ENCODE measurements at regions of chr9 and their contacts with region 1.

Region 1: DNA sequence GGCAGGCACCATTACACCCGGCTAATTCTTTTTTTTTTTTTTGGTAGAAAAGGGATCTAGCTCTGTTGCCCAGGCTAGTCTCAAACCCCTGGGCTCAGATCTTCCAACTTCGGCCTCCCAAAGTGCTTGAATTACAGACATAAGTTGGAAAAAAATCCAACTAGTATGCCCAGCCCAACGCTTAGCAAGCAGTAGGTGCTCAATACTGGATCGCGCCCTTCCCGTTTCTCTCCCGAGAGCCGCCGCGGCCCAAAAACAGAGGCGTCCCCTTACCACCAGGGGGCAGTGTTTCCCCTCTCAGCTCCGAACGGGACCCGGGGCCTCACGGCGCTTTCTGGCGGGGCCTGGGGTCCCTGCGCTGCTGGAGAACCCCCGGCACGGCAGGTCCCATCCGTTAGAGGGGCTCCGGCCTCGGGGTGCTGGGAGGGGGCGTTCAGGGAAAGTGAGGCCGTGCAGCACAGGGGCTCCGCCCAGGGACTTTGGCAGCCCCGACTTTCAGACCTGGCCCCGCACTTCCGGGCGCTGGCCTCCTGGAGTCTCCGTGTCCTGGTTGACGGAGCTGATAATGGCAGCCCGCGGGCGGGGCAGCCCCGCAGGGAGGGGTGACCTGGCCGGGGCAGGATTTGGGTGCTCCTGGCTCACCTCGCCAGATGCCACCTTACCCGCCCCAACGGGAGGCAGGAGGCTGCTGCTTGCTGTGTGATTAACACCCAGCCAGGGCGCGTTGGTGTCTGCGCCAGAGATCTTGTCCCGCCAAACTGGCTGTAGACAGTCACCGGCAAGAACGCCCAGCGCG is 15.2 kb downstream of the PTGES start:
- DNase-seq: peak; percentile 90
- ATAC-seq: peak; percentile 86
- H3K4me3 ChIP-seq: peak overlapping the region; percentile 2 to 81 (median 66)
- H3K4me3 Mint-ChIP-seq: peak overlapping the region; percentile 71
- H3K27ac ChIP-seq: peak overlapping the region in 1 of 2 donors; percentile 78
- H3K27ac Mint-ChIP-seq: peak overlapping the region; percentile 74
- H3K4me1 ChIP-seq: peaks cover 0 to 16% of the 10 kb centered on the region in 2 donors
- H3K4me1 Mint-ChIP-seq: peaks cover 7% of the 10 kb centered on the region
- H3K27me3 ChIP-seq: peaks cover 0 to 12% (median 0%) of the 10 kb centered on the region in 4 experiments
- H3K27me3 Mint-ChIP-seq: no peaks in the 10 kb centered on the region
- CTCF ChIP-seq: peak; percentile 91

Region 2: GRCh38 chr9:129131300-129132145 is 606.2 kb before region 1 on chr9:
- CTCF ChIA-PET with region 1: interaction called, 9 read pairs
- POLR2A ChIA-PET with region 1: no interaction called
- intact Hi-C with region 1: loop called (anchors 1 kb)
- DNase-seq: peak; percentile 85
- ATAC-seq: peak; percentile 99
- H3K4me3 ChIP-seq: no peak overlapping the region
- H3K4me3 Mint-ChIP-seq: no peak overlapping the region
- H3K27ac ChIP-seq: no peak overlapping the region
- H3K27ac Mint-ChIP-seq: peak overlapping the region; percentile 20
- H3K4me1 ChIP-seq: peaks cover 4 to 8% of the 10 kb centered on the region in 2 donors
- H3K4me1 Mint-ChIP-seq: peaks cover 5% of the 10 kb centered on the region
- H3K27me3 ChIP-seq: no peaks in the 10 kb centered on the region
- H3K27me3 Mint-ChIP-seq: no peaks in the 10 kb centered on the region
- CTCF ChIP-seq: peak; percentile 97

Region 3: DNA sequence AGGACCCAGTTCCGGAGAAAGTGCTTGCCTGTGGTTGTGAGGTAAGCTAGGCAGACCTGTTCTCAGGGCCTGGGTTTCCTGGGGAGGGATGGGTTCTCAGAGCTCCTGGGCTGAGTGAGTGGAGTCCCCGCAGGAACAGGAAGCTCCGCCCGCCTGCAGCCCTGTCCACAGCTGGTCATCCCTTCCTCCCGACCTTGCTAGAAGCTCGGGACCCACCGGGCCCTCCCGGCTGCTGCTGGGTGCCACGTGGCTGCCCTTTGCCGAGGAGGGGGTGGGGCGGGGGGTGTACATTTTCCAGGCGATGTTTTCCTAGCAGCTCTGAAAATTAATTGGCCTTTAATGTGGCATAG is 314.9 kb before region 1 on chr9:
- CTCF ChIA-PET with region 1: no interaction called
- POLR2A ChIA-PET with region 1: no interaction called
- intact Hi-C with region 1: no loop called
- DNase-seq: no peak
- ATAC-seq: no peak
- H3K4me3 ChIP-seq: no peak overlapping the region
- H3K4me3 Mint-ChIP-seq: no peak overlapping the region
- H3K27ac ChIP-seq: no peak overlapping the region
- H3K27ac Mint-ChIP-seq: no peak overlapping the region
- H3K4me1 ChIP-seq: no peaks in the 10 kb centered on the region
- H3K4me1 Mint-ChIP-seq: no peaks in the 10 kb centered on the region
- H3K27me3 ChIP-seq: no peaks in the 10 kb centered on the region
- H3K27me3 Mint-ChIP-seq: peaks cover 3% of the 10 kb centered on the region
- CTCF ChIP-seq: no peak

Region 4: DNA sequence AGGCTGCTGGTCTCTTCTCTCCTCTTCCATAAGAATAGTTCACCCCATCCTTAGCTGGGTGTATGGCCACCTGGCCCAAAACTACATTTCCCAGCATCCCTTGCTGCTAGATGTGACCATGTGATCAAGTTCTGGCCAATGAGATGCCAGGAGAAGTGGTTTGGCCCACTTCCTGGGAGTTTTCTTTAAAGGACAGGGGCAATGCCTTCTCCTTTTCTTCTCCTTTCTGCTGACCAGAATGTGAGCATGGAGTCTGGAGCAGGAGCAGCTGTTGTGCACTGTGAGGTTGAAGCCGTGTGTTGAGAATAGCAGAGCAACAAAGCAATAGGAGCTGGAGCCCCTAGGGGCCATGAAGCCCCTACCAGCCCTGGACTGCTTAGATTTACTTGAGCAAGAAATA is 153.5 kb before region 1 on chr9:
- CTCF ChIA-PET with region 1: no interaction called
- POLR2A ChIA-PET with region 1: no interaction called
- intact Hi-C with region 1: no loop called
- DNase-seq: peak; percentile 77
- ATAC-seq: peak; percentile 72
- H3K4me3 ChIP-seq: no peak overlapping the region
- H3K4me3 Mint-ChIP-seq: no peak overlapping the region
- H3K27ac ChIP-seq: no peak overlapping the region
- H3K27ac Mint-ChIP-seq: peak overlapping the region; percentile 2
- H3K4me1 ChIP-seq: peaks cover 18 to 21% of the 10 kb centered on the region in 2 donors
- H3K4me1 Mint-ChIP-seq: peaks cover 22% of the 10 kb centered on the region
- H3K27me3 ChIP-seq: peaks cover 0 to 3% (median 1%) of the 10 kb centered on the region in 4 experiments
- H3K27me3 Mint-ChIP-seq: peaks cover 25% of the 10 kb centered on the region
- CTCF ChIP-seq: no peak

Region 5: DNA sequence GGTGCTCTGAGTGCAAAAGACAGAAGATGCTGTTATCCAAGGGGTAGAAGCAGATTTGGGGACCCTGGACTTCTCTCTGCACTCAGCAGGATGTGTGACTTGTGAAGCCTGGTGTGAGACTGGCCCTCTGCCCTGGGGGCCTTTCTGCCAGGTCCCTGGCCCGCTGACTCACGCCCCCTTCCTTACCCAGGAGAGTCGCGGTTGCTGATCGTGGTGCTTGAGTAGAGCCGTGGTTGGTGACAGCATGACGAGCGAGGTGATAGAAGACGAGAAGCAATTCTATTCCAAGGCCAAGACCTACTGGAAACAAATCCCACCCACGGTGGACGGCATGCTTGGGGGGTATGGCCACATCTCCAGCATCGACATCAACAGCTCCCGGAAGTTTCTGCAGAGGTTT is 105.2 kb before region 1 on chr9:
- CTCF ChIA-PET with region 1: no interaction called
- POLR2A ChIA-PET with region 1: no interaction called
- intact Hi-C with region 1: no loop called
- DNase-seq: no peak
- ATAC-seq: no peak
- H3K4me3 ChIP-seq: no peak overlapping the region
- H3K4me3 Mint-ChIP-seq: no peak overlapping the region
- H3K27ac ChIP-seq: peak overlapping the region in 1 of 2 donors; percentile 23
- H3K27ac Mint-ChIP-seq: no peak overlapping the region
- H3K4me1 ChIP-seq: peaks cover 4% of the 10 kb centered on the region in 2 donors
- H3K4me1 Mint-ChIP-seq: peaks cover 32% of the 10 kb centered on the region
- H3K27me3 ChIP-seq: no peaks in the 10 kb centered on the region
- H3K27me3 Mint-ChIP-seq: no peaks in the 10 kb centered on the region
- CTCF ChIP-seq: no peak

Region 6: DNA sequence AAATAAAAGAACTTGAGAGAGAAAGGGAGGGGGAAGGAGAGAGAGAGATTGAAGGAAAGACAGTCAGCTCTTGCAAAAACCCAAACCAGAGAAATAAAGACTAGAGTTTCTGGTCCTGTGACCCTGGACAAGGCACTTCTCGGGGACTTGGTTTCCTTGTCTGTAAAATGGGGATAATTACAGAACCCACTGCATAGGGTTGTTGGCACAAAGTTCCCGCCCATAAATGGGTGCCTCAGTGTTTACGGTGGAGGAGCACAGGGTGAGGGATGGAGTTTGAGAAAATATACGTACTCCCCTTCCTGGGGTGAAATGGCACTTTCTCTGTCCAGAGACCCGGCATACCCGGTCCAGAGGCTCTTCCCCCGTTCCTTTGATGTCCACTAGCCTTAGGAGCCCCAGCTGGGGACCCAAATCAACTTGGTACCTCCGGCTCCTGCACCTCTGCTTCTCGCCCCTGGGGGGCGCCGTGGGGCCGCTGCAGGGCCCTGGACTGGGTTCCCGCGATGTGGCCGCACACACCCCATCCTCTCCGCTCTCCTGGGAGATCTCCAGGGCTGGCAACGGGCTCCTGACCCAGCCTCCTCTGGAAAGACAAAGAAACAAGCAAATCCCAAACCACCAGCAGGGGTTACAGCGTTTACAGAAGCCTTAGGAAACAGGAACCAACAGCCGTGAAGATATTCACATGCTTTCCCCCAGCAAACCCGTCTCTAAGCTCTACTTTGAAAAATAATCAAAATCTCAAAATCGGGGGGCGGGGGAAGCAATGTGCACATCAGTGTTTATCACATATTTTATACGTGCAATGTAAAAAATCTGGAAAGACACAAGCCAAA is 11.1 kb before region 1 on chr9:
- CTCF ChIA-PET with region 1: interaction called, 36 read pairs
- POLR2A ChIA-PET with region 1: no interaction called
- intact Hi-C with region 1: no loop called
- DNase-seq: peak; percentile 56
- ATAC-seq: peak; percentile 75
- H3K4me3 ChIP-seq: no peak overlapping the region
- H3K4me3 Mint-ChIP-seq: peak overlapping the region; percentile 26
- H3K27ac ChIP-seq: no peak overlapping the region
- H3K27ac Mint-ChIP-seq: no peak overlapping the region
- H3K4me1 ChIP-seq: peaks cover 5% of the 10 kb centered on the region in 2 donors
- H3K4me1 Mint-ChIP-seq: no peaks in the 10 kb centered on the region
- H3K27me3 ChIP-seq: peaks cover 0 to 14% (median 5%) of the 10 kb centered on the region in 4 experiments
- H3K27me3 Mint-ChIP-seq: peaks cover 26% of the 10 kb centered on the region
- CTCF ChIP-seq: peak; percentile 81

Region 7: GRCh38 chr9:129796029-129796910 is 58.6 kb after region 1 on chr9:
- CTCF ChIA-PET with region 1: interaction called, 19 read pairs
- POLR2A ChIA-PET with region 1: interaction called, 6 read pairs
- intact Hi-C with region 1: loop called (anchors 2 kb)
- DNase-seq: no peak
- ATAC-seq: no peak
- H3K4me3 ChIP-seq: no peak overlapping the region
- H3K4me3 Mint-ChIP-seq: no peak overlapping the region
- H3K27ac ChIP-seq: no peak overlapping the region
- H3K27ac Mint-ChIP-seq: no peak overlapping the region
- H3K4me1 ChIP-seq: no peaks in the 10 kb centered on the region
- H3K4me1 Mint-ChIP-seq: no peaks in the 10 kb centered on the region
- H3K27me3 ChIP-seq: peaks cover 0 to 10% (median 0%) of the 10 kb centered on the region in 4 experiments
- H3K27me3 Mint-ChIP-seq: peaks cover 4% of the 10 kb centered on the region
- CTCF ChIP-seq: no peak

Region 8: GRCh38 chr9:130235897-130236668 is 498.4 kb after region 1 on chr9:
- CTCF ChIA-PET with region 1: interaction called, 10 read pairs
- POLR2A ChIA-PET with region 1: no interaction called
- intact Hi-C with region 1: no loop called
- DNase-seq: peak; percentile 79
- ATAC-seq: no peak
- H3K4me3 ChIP-seq: no peak overlapping the region
- H3K4me3 Mint-ChIP-seq: peak overlapping the region; percentile 23
- H3K27ac ChIP-seq: no peak overlapping the region
- H3K27ac Mint-ChIP-seq: peak overlapping the region; percentile 15
- H3K4me1 ChIP-seq: peaks cover 18 to 28% of the 10 kb centered on the region in 2 donors
- H3K4me1 Mint-ChIP-seq: peaks cover 28% of the 10 kb centered on the region
- H3K27me3 ChIP-seq: peaks cover 0 to 12% (median 0%) of the 10 kb centered on the region in 4 experiments
- H3K27me3 Mint-ChIP-seq: peaks cover 3% of the 10 kb centered on the region
- CTCF ChIP-seq: peak; percentile 97